GM13976 (cell line): ENCODE measurements at regions of chr2 and their contacts with region 1.

Region 1: DNA sequence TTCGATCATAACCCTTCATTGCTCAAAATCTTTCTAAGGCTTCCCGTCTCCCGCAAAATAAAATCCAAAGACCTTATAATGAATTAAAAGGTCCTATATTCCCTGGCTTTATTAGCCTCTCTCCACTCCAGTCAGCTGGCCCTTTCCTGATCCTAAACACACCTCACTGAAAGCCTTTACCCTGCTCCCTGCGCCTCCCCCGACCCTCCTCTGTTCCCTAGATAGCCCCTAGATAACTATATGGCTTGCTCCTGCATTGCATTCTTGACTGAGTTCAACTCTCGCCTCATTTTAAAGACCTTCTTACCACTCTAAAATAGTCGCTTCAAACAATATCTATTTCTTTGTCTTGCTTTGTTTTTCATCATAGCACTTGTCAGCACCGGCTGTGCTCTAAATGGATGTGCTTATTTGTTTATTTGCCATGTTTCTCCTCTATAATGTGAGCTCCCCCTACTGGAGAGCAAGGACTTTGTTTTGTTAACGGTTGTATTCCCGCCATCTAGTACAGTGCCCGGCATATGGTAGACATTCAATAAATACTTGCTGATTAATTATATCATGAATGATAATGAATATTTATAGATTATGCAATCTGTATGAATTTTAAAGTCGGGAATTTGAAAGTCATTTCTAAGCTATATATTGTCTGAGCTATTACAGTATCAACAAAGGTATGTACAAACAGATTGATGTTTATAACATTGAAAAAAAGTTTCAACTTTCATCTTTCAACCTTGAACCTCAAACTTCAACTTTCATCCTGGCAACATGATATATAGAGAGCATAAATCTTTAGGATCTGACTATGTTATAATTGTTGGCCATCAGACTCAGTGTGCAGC is 32.4 kb upstream of the VIT start:
- DNase-seq: peak; percentile 62
- CTCF ChIP-seq: peak; percentile 50

Region 2: DNA sequence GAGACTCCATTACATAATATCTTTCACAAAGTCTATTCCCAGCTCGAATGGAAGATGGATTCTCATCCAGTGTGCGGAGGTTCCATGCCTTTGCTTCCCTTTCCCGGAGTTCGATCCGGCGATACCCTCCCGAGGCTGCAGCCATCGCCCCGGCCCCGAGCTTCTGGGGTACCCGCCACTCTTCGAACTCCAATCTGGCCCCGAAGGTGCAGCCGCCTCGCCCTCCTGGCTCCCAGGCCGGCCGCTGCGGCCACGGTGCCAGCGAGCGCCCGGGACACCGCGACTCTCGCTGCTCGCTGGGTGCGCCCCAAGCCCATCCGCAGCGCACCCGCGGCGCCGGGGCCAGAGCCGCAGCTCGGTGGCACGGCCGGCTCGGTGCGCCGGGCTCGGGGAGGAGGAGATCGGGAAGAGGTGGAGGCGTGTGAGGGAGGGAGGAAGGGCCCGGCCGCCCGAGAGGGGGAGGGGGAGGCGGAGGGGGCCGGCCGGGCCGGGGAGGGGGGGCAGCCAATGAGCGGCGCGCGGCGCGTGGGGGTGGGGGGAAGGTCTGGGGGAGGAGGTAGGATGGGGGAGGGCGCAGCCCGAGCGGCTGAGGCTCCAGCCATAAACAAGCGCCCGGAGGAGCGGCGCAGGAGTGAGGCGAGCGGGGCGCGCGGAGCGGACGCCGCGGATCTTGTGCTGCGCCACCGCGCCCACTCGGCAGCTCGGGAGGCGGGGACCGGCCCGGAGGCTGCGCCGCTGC is 308.8 kb before region 1 on chr2 and contains the start of gene CRIM1:
- in situ Hi-C with region 1: loop called (anchors 10 kb)
- DNase-seq: peak; percentile 75
- CTCF ChIP-seq: no peak